Posterior vena cava (tissue), 2 donors: ENCODE measurements at regions of chr12 and their contacts with region 1.

Region 1: GRCh38 chr12:6316922-6317692 is 6.6 kb downstream of the PLEKHG6 start:
- DNase-seq: no peak

Region 2: DNA sequence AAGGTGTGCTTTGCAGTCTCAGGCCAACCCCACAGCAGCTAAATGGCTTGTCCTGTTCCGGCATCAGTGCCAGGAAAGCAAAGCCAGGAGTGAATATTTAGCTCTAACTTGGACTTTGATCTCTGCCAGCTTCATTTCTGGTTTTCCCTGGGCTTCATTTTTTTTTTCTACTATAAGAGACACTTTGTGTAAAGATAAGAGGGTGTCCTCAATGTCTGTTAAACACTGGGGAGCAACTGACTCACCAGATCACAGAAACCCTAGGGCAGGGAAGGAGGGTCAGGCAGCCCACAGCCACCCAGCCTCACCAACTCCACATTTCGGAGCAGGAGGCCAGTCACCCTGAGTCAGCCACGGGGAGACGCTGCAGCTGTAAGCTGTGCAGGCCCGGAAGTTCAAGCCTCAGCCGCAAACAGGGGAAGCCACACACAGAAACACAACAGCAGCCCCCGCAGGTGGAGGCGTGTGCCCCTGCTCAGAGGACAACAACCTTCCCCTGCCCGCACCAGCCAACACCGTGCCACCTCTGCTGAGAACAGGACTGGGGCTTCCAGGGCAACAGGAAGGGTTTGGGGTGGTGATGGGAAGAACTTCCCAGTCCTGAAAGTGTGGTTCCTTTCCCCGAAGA is 18.5 kb after region 1 on chr12:
- intact Hi-C with region 1: no loop called
- DNase-seq: peak; percentile 95

Region 3: GRCh38 chr12:7079826-7080125 is 762.7 kb after region 1 on chr12:
- intact Hi-C with region 1: loop called in 1 of 2 experiments (anchors 5 kb)
- DNase-seq: no peak